ENCODE measurements at regions of chr1 and their contacts with region 1.

Region 1: DNA sequence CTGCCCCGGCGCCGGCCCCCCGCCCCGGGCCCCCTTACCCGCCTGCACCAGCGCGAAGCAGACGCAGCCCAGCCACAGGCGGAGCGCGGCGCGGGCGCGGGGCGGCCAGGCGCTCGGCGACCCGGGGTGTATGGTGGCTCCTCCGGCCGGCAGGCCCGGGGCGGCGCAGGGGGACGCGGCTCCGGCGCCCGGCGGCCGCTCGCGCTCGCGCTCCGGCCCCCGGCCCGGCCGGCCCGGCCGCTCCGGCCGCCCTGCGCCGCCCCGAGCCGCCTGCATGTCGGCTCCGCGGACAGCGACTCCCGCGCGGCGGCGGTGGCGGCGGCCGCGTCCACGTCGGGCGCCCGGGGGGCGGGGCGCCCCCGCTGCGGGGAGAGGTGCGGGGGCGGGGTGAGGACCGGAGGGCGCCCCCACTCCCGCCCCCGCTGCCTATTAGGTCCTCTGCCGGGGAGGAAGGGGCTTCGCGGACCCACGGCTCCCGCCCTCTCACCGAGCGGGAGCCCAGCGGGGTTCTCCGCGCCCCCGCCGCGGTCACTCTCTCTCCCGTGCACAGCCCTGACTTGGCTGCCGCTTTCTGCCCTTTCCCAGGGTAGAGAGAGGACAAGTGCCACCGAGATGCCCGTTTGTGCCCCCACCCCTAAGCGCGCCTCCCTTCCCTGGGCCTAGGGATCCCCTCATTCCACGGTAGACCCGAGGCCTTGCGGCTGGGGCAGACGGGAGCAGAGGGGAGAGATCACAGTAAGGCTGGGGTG is at the start of gene FNDC5:
- DNase-seq: peak in 1 of 2 donors; percentile 63
- H3K4me3 ChIP-seq: peak within 1 kb of the TSS; percentile 49 to 59
- H3K27ac ChIP-seq: peak within 1 kb of the TSS; percentile 31 to 42
- H3K4me1 ChIP-seq: peaks cover 0 to 36% (median 28%) of the 10 kb centered on the region in 4 donors
- H3K27me3 ChIP-seq: peaks cover 0 to 6% of the 10 kb centered on the region in 2 donors
- CTCF ChIP-seq: no peak

Region 2: DNA sequence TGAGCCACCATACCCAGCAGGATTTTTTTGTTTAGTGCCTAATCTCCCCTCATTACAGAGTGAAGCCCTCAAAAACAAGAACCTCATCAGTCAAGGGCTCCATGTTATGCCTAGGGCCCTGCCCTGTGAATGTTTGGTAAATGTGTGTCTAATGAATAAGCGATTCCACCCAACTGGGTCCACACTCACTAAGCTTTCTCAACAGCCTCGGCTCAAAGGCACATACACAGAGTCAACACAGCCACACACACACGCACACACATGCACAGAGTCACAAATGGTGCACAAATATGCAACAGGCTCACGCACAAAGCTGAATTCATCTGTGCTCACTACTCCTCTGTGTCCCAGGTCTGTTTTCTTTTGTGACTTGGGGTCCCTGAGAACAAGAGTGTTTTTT is 156.5 kb before region 1 on chr1:
- intact Hi-C with region 1: loop called (anchors 5 kb)
- DNase-seq: no peak
- H3K4me3 ChIP-seq: no peak overlapping the region
- H3K27ac ChIP-seq: no peak overlapping the region
- H3K4me1 ChIP-seq: peaks cover 0 to 12% (median 3%) of the 10 kb centered on the region in 4 donors
- H3K27me3 ChIP-seq: no peaks in the 10 kb centered on the region
- CTCF ChIP-seq: no peak

Region 3: DNA sequence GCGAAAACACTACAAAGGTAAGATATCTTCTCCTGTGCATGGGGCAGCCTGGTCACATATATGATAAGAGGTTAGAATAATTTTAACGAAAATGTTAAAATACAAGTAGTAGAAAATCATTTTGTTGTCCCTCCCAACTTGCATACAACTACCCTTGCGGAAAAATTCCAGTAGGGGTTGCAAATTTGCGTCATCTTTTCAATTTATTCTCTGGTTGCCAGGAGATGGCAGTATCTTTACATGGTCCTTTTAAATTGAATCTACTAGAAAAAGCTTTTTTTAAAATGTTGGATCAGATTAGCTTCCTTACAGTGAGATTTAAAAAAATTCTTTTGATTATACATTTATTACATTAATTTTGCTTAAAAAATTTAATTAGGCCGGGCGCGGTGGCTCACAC is 42.4 kb before region 1 on chr1:
- intact Hi-C with region 1: loop called (anchors 5 kb)
- DNase-seq: no peak
- H3K4me3 ChIP-seq: no peak overlapping the region
- H3K27ac ChIP-seq: no peak overlapping the region
- H3K4me1 ChIP-seq: no peaks in the 10 kb centered on the region
- H3K27me3 ChIP-seq: no peaks in the 10 kb centered on the region
- CTCF ChIP-seq: peak; percentile 24 to 27

Region 4: GRCh38 chr1:33219881-33220661 is 349.3 kb after region 1 on chr1:
- intact Hi-C with region 1: no loop called
- DNase-seq: no peak
- H3K4me3 ChIP-seq: no peak overlapping the region
- H3K27ac ChIP-seq: no peak overlapping the region
- H3K4me1 ChIP-seq: peaks cover 0 to 9% (median 0%) of the 10 kb centered on the region in 4 donors
- H3K27me3 ChIP-seq: no peaks in the 10 kb centered on the region
- CTCF ChIP-seq: no peak